MCF 10A (cell line): ENCODE measurements at regions of chr13 and their contacts with region 1.

Region 1: GRCh38 chr13:48975856-48976575 is at the start of gene FNDC3A:
- DNase-seq: peak; percentile 83
- H3K4me3 Mint-ChIP-seq: peak within 1 kb of the TSS; percentile 90
- H3K27ac Mint-ChIP-seq: peak within 1 kb of the TSS; percentile 97
- H3K4me1 Mint-ChIP-seq: peaks cover 25% of the 10 kb centered on the region
- H3K27me3 Mint-ChIP-seq: no peaks in the 10 kb centered on the region
- CTCF ChIP-seq: no peak
- total RNA-seq, gene FNDC3A: 61.4 and 63.0 TPM in 2 replicates

Region 2: DNA sequence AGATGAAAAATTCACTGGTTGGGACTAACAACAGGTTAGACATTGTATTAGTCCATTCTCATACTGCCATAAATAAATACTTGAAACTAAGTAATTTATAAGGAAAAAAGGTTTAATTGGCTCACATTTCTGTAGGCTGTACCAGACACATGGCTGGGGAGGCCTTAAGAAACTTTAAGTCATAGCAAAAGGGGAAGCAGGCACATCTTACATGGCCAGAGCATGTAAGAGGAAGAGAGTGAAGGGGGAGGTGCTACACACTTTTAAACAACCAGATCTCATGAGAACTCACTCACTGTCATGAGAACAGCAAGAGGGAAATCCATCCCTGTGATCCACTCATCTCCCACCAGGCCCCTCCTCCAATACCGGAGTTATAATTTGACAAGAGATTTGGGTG is 1100.8 kb before region 1 on chr13:
- CTCF ChIA-PET with region 1: no interaction called
- POLR2A ChIA-PET with region 1: no interaction called
- intact Hi-C with region 1: no loop called
- DNase-seq: no peak
- H3K4me3 Mint-ChIP-seq: no peak overlapping the region
- H3K27ac Mint-ChIP-seq: no peak overlapping the region
- H3K4me1 Mint-ChIP-seq: no peaks in the 10 kb centered on the region
- H3K27me3 Mint-ChIP-seq: no peaks in the 10 kb centered on the region
- CTCF ChIP-seq: no peak

Region 3: GRCh38 chr13:48892053-48892690 is 83.8 kb before region 1 on chr13:
- CTCF ChIA-PET with region 1: no interaction called
- POLR2A ChIA-PET with region 1: interaction called, 6 read pairs
- intact Hi-C with region 1: loop called (anchors 2 kb)
- DNase-seq: peak; percentile 89
- H3K4me3 Mint-ChIP-seq: no peak overlapping the region
- H3K27ac Mint-ChIP-seq: peak overlapping the region; percentile 86
- H3K4me1 Mint-ChIP-seq: peaks cover 14% of the 10 kb centered on the region
- H3K27me3 Mint-ChIP-seq: no peaks in the 10 kb centered on the region
- CTCF ChIP-seq: no peak

Region 4: GRCh38 chr13:48965736-48966135 is 10.3 kb before region 1 on chr13:
- CTCF ChIA-PET with region 1: no interaction called
- POLR2A ChIA-PET with region 1: interaction called, 15 read pairs
- intact Hi-C with region 1: no loop called
- DNase-seq: no peak
- H3K4me3 Mint-ChIP-seq: no peak overlapping the region
- H3K27ac Mint-ChIP-seq: no peak overlapping the region
- H3K4me1 Mint-ChIP-seq: peaks cover 18% of the 10 kb centered on the region
- H3K27me3 Mint-ChIP-seq: no peaks in the 10 kb centered on the region
- CTCF ChIP-seq: no peak

Region 5: DNA sequence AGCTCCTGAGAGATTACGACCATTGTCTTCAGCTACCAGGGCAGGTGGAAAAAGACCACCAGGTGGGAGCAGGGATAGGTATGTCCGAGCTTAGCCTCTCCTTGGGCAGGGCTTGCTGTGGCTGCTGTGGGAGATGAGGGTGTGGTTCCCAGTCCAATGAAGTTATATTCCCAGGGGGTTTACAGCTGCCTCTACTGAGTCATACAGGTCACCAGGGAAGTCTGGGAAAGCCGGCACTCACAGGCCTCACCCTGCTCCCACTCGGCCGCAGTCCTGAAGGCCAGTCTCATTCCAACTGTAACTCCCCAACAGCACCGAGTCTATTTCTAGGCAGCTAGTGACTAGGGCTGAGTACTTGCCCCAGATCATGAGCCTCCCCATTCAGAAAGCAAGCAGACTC is 76.8 kb after region 1 on chr13:
- CTCF ChIA-PET with region 1: no interaction called
- POLR2A ChIA-PET with region 1: interaction called, 3 read pairs
- intact Hi-C with region 1: loop called (anchors 5 kb)
- DNase-seq: peak; percentile 77
- H3K4me3 Mint-ChIP-seq: no peak overlapping the region
- H3K27ac Mint-ChIP-seq: peak overlapping the region; percentile 28
- H3K4me1 Mint-ChIP-seq: peaks cover 20% of the 10 kb centered on the region
- H3K27me3 Mint-ChIP-seq: no peaks in the 10 kb centered on the region
- CTCF ChIP-seq: no peak

Region 6: GRCh38 chr13:49098771-49099512 is 122.9 kb after region 1 on chr13:
- CTCF ChIA-PET with region 1: no interaction called
- POLR2A ChIA-PET with region 1: interaction called, 16 read pairs
- intact Hi-C with region 1: loop called (anchors 1 kb)
- DNase-seq: peak; percentile 38
- H3K4me3 Mint-ChIP-seq: no peak overlapping the region
- H3K27ac Mint-ChIP-seq: peak overlapping the region; percentile 90
- H3K4me1 Mint-ChIP-seq: peaks cover 33% of the 10 kb centered on the region
- H3K27me3 Mint-ChIP-seq: no peaks in the 10 kb centered on the region
- CTCF ChIP-seq: no peak

Region 7: GRCh38 chr13:49190901-49191300 is 214.9 kb after region 1 on chr13:
- CTCF ChIA-PET with region 1: no interaction called
- POLR2A ChIA-PET with region 1: interaction called, 3 read pairs
- intact Hi-C with region 1: loop called (anchors 10 kb)
- DNase-seq: no peak
- H3K4me3 Mint-ChIP-seq: no peak overlapping the region
- H3K27ac Mint-ChIP-seq: no peak overlapping the region
- H3K4me1 Mint-ChIP-seq: no peaks in the 10 kb centered on the region
- H3K27me3 Mint-ChIP-seq: no peaks in the 10 kb centered on the region
- CTCF ChIP-seq: no peak

Region 8: DNA sequence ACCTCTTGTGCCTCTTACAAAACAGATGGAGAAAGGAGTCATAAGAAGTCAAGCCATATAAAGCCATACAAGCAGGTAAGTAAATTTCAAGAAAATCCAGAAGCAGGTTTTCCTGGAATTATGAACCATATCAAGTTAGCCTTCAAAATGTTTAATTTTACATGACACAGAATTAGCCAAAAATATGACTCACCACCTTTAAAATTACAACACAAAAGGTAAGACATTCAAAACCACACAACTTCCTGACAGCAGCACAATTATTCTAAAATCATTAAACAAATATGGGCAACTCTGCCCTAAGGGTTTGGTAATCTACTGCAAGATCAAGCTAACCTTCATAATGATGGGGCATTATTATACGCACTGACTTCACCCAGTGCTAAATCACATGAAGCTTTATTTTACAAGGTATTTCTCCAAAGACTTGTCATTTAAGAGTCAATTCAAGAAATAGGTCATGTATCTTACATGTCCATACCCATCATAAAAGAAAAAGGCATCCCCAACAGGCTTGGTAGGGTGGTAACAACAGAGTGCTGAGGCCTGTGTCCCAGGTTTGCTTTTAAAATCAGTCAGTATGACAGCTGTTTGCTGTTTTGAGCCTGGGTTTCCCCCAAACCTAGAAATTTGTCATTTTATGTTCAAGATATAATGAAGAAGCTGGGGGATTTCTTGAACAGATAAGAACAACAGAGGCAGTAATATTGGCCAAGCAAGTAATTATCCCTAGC is 594.1 kb after region 1 on chr13:
- CTCF ChIA-PET with region 1: no interaction called
- POLR2A ChIA-PET with region 1: no interaction called
- intact Hi-C with region 1: no loop called
- DNase-seq: peak; percentile 72
- H3K4me3 Mint-ChIP-seq: no peak overlapping the region
- H3K27ac Mint-ChIP-seq: peak overlapping the region; percentile 46
- H3K4me1 Mint-ChIP-seq: peaks cover 22% of the 10 kb centered on the region
- H3K27me3 Mint-ChIP-seq: no peaks in the 10 kb centered on the region
- CTCF ChIP-seq: no peak